T-cell (primary cell): ENCODE measurements at regions of chr15 and their contacts with region 1.

Region 1: GRCh38 chr15:67087507-67088174 is 22.2 kb downstream of the SMAD3 start:
- DNase-seq: no peak
- ATAC-seq: no peak
- H3K4me3 ChIP-seq: no peak overlapping the region
- H3K4me3 Mint-ChIP-seq: peak overlapping the region in 2 of 3 donors; percentile 26 to 76
- H3K27ac ChIP-seq: peak overlapping the region; percentile 14
- H3K27ac Mint-ChIP-seq: peak overlapping the region; percentile 71 to 80
- H3K4me1 ChIP-seq: peaks cover 43 to 96% of the 10 kb centered on the region in 2 experiments
- H3K4me1 Mint-ChIP-seq: peaks cover 84 to 99% (median 96%) of the 10 kb centered on the region in 3 donors
- H3K27me3 ChIP-seq: no peaks in the 10 kb centered on the region
- H3K27me3 Mint-ChIP-seq: no peaks in the 10 kb centered on the region

Region 2: DNA sequence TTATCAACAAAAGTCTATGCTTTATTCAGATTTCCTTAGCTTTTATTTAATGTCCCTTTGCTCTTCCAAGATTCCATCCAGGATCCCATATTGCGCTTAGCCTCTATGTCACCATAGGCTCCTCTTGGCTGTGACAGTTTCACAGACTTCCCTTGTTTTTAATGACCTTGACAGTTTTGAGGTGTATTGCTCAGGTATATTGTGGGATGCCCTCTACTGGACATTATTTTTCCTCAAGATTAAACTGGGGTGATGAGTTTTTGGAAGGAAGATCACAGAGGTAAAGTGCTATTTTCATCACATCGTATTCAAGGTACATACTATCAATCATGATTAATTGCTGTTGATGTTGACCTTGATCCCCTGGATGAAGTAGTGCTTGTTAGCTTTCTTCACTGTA is 121.4 kb before region 1 on chr15:
- CTCF ChIA-PET with region 1: no interaction called
- POLR2A ChIA-PET with region 1: no interaction called
- DNase-seq: peak in 1 of 35 experiments; percentile 33
- ATAC-seq: no peak
- H3K4me3 ChIP-seq: no peak overlapping the region
- H3K4me3 Mint-ChIP-seq: no peak overlapping the region
- H3K27ac ChIP-seq: no peak overlapping the region
- H3K27ac Mint-ChIP-seq: no peak overlapping the region
- H3K4me1 ChIP-seq: no peaks in the 10 kb centered on the region
- H3K4me1 Mint-ChIP-seq: no peaks in the 10 kb centered on the region
- H3K27me3 ChIP-seq: peaks cover 0 to 2% of the 10 kb centered on the region in 2 experiments
- H3K27me3 Mint-ChIP-seq: no peaks in the 10 kb centered on the region

Region 3: DNA sequence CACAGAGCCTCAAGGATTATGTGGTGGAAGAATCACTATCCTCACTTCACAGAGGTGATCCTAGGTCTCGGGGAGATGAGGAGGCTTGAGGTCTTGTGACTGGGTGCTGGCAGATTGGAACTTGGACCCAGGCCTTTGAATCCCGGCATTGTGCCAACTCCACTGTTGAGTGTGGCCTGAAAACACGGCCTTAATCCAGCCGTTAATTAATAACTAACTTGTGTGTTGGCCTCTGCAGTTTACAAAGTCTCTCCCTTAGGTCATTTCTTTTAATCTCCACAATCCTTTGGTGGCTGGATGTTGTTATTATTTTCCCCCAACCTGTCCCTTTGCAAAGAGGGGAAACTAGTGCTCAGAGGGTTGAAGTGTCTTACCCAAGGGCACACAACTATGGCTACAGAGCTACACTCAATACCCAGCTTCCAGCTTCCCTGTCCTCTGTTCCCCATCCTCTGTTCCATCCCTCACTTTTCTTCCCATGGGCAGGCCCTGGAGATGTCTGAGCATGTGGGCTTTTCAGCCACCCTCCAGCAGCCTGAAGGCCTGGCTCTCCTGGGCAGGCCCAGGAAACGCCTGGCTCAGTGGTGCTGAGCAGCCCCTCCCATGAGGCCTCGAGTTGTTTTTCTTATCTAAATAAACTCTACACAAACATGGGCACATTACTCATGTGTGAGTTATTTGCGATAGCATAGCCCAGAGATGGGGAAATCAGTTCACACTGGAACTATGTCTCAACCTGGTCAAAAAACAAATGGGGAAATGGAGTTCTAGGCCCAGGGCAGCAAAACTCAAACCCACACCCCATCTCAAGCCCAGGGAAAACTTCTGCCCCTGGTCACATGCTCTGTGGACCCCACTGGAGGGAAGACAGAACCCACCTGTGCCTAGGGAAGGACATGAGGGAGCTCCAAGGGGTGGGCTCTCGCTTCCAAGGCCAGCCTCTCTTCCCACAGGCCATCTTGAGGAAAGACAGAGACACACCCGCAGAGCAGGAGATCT is 39.1 kb before region 1 on chr15:
- CTCF ChIA-PET with region 1: no interaction called
- POLR2A ChIA-PET with region 1: interaction called in 1 of 2 experiments, 10 read pairs
- DNase-seq: no peak
- ATAC-seq: no peak
- H3K4me3 ChIP-seq: no peak overlapping the region
- H3K4me3 Mint-ChIP-seq: no peak overlapping the region
- H3K27ac ChIP-seq: no peak overlapping the region
- H3K27ac Mint-ChIP-seq: no peak overlapping the region
- H3K4me1 ChIP-seq: peaks cover 8 to 10% of the 10 kb centered on the region in 2 experiments
- H3K4me1 Mint-ChIP-seq: peaks cover 10 to 22% (median 14%) of the 10 kb centered on the region in 3 donors
- H3K27me3 ChIP-seq: peaks cover 0 to 6% of the 10 kb centered on the region in 2 experiments
- H3K27me3 Mint-ChIP-seq: no peaks in the 10 kb centered on the region